Right ventricle myocardium inferior (tissue), 1 donor: ENCODE measurements at regions of chr2 and their contacts with region 1.

Region 1: GRCh38 chr2:190938771-190939335 is 58.2 kb downstream of the GLS start:
- DNase-seq: no peak
- ATAC-seq: no peak

Region 2: GRCh38 chr2:190891372-190891771 is 47.5 kb before region 1 on chr2:
- intact Hi-C with region 1: loop called (anchors 5 kb)
- DNase-seq: no peak
- ATAC-seq: no peak

Region 3: DNA sequence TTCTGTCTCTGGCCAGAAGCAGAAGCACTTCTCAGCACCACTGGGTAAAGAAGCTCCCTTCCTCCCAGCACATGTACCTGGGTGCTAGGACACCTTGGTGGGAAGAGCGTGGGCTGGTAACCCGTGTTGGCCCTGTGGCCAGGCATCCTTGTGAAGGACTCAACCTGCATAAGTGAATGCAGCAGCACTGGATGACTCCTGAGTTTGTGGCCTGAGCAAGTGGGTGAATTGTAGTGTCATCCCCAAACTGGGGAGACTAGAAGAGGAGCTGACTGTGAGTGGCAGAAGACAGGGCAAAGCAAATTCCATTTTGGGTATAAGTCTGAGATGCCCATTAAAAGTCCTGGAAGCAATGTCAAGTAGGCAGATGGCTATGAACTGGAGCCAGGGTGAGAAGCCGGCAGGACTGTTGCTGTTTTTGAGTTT is 11.7 kb after region 1 on chr2:
- intact Hi-C with region 1: no loop called
- DNase-seq: no peak
- ATAC-seq: no peak

Region 4: DNA sequence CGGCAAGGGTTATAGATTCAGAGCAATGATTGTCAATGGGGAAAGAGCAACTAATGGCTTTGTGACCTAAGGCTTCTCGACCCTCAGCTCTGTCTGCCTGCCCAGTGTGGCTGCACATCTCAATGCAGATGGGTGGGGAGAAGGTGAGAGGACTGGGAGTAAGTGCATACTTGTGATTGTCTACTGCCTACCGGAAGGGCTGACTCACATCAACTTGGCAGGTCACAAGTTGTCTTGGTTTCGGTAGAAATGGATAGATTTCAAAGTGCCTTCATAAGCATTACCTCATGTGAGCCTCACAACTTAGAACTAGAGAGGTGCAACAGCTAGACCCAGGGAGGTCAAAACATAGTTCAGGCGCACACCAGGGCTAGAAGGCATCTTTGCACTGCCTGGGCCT is 45.7 kb after region 1 on chr2:
- intact Hi-C with region 1: no loop called
- DNase-seq: no peak
- ATAC-seq: no peak

Region 5: GRCh38 chr2:191066197-191066918 is 127.5 kb after region 1 on chr2:
- intact Hi-C with region 1: no loop called
- DNase-seq: no peak
- ATAC-seq: peak; percentile 48